ENCODE measurements at regions of chr2 and their contacts with region 1.

Region 1: DNA sequence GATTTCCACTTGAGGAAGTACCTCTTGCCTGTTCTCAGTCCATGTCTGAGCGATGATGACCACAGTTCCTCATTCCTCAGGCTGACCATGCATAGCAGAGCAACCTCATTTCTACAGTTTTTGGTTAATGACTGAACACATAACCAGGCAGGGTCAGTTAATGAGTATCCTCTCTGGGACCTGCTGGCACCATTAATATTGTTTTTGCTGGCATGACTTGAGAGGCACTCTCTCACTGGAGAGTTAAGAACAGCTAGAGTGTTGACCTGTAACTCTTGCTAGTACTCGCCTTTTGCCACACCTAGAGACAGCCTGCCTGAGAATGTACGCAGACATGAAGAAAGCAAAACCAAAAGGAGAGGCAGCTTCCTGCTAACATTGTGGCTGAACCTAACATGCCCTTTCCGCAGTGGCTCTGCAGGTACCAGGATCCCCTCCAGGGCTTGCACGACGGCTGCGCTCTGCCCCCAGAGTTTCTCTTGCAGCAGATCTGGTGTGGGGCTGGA is 23.9 kb downstream of the PECR start:
- DNase-seq: peak; percentile 49
- H3K4me3 ChIP-seq: peak overlapping the region; percentile 19
- H3K27ac ChIP-seq: no peak overlapping the region
- H3K4me1 ChIP-seq: peaks cover 13% of the 10 kb centered on the region
- CTCF ChIP-seq: no peak

Region 2: DNA sequence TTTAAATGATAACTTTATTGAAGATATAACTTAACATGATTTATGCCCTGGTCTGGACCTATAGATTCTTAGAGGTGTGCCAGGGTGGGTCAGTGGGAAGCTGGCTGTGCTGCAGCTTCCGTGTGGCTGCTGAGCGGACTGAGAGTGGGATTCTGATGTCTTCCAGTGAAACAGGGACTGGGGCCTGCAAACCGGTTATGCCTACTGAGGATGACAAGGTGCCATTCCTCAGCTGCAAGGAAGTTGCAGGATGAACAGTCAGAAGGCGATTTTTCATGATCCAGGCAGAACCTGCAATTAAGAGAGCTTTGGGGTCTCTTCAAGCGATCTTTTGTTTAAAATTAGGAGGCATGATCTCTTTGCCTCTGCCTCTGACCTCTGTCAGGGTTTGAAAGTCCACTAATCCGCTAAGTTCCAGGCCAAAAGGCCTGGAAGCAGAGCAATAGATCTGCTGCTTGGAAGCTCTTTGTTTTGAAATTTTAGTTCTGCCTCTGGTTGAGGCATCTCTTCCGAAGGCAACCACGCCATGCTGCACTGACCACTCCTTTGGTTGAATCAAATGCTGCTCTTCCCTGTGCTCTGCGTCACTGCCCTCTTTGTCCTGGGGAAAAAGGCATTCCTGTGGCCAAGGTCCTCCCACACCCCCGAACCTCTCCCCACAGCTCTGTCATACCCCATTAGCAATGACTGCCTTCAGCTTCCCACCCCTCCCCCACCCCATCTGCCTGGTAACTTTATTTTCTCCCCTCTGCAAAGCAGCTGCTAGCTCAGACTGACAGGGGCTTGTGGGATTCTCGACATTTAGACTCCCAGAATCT is 25.9 kb after region 1 on chr2:
- CTCF ChIA-PET with region 1: no interaction called
- POLR2A ChIA-PET with region 1: no interaction called
- intact Hi-C with region 1: loop called (anchors 2 kb)
- DNase-seq: no peak
- H3K4me3 ChIP-seq: no peak overlapping the region
- H3K27ac ChIP-seq: peak overlapping the region; percentile 59
- H3K4me1 ChIP-seq: peaks cover 36% of the 10 kb centered on the region
- CTCF ChIP-seq: no peak

Region 3: DNA sequence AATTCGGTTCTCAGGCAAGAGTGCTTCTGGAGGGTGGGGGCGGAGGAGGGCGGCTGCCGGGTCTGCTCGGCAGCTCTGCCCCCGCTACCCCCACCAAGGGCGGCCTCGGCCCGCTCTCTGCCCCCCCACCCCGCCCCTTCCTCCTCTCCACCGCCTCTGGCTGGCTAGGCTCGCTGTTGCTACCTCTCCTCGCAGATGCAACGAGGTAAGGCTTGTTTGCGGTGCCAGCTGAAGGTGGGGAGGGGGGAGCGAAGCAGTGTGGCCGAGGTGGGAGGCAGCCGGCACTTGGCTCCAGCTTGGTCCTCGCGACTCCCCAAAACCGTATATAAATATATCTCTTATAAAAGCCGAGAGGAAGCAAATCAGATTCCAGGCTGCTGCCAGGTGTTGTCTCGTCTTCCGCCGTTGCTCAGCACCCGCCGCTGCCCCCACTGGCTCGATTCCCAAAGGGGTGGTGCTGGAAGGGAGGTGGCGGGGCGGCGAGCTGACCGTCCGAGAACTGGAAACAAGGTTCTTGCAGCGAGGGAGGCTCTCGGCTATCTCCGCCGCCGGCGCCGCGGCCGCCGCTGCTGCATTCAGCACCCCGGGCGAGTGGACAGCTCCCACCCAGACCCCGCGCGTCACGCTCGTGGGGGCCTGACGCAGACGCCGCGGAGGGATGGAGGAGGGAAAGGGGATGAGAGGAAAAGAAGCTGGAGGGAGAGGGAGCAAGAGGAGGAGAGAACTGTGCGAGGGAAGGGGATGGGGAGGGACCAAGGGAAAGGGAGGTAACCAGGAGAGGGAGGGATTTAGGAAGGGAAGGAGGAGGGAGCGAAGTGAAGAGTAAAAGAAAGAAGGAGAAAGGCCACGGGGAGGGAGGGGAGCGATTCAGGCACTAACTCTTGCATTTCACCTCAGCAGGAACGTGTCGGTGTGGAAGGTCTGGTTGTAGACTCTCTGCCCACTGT is 314.3 kb after region 1 on chr2 and contains the start of gene MARCHF4:
- CTCF ChIA-PET with region 1: no interaction called
- POLR2A ChIA-PET with region 1: no interaction called
- intact Hi-C with region 1: no loop called
- DNase-seq: no peak
- H3K4me3 ChIP-seq: no peak within 1 kb of the TSS
- H3K27ac ChIP-seq: no peak within 1 kb of the TSS
- H3K4me1 ChIP-seq: no peaks in the 10 kb centered on the region
- CTCF ChIP-seq: no peak
- total RNA-seq, gene MARCHF4: not detected in 2 replicates

Measured in OCI-LY7 (cell line).